Aorta (tissue), 5 donors: ENCODE measurements at regions of chr7 and their contacts with region 1.

Region 1: DNA sequence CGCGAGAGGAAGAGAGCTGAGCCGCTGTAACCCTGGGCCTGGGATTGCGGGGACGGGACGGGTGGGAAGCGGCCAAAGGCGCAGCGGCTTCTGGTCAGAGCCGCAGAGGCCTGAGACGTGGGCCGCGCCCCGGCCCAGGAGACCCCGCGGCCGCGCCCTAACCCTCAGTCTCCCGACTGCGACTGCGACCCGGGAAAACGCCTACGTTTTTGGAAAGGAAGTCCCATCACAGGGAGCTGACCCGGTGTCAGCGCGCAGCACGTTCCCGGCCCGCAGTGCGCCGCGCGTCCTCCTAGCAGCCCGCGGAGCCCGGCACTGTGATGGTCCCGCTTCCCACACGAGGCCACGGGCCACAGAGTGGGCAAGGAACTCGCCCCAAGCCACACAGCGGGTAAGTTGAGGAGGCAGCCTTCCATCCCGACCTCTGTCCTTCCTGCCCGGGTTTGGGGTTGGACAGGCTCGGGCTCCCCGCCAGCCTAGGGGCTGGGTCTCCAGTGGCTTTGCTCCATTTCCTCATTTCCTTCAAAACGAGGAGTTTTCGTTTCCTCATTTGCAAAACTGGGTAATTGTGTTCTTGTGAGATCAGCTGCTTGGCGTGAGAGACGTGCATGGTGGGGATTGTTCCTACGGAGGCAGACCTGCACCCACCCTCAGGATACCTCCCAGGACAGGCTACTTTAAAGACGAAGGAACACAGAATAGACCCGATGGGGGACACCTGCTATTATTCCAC is 1.2 kb downstream of the GPNMB start:
- DNase-seq: peak; percentile 84 to 85
- ATAC-seq: peak; percentile 81
- H3K4me3 ChIP-seq: peak overlapping the region; percentile 15 to 48
- H3K27ac ChIP-seq: peak overlapping the region; percentile 61 to 68
- H3K4me1 ChIP-seq: peaks cover 0 to 3% of the 10 kb centered on the region in 2 donors
- H3K27me3 ChIP-seq: no peaks in the 10 kb centered on the region

Region 2: GRCh38 chr7:23105644-23106056 is 142.1 kb before region 1 on chr7 and contains the start of gene KLHL7:
- intact Hi-C with region 1: loop called in 1 of 2 experiments (anchors 10 kb)
- DNase-seq: peak; percentile 98 to 99
- ATAC-seq: peak; percentile 99
- H3K4me3 ChIP-seq: peak within 1 kb of the TSS; percentile 74 to 88
- H3K27ac ChIP-seq: peak within 1 kb of the TSS in 1 of 2 donors; percentile 38
- H3K4me1 ChIP-seq: peaks cover 0 to 5% of the 10 kb centered on the region in 2 donors
- H3K27me3 ChIP-seq: no peaks in the 10 kb centered on the region
- total RNA-seq, gene KLHL7: 21.0 to 23.0 TPM